Activated naive CD4-positive, alpha-beta T cell treated with anti-CD3 and anti-CD28 coated beads for 36 hours (primary cell): ENCODE measurements at regions of chr2 and their contacts with region 1.

Region 1: GRCh38 chr2:203893401-203893800 is 25.8 kb downstream of the CTLA4 start:
- DNase-seq: no peak
- H3K4me3 Mint-ChIP-seq: no peak overlapping the region
- H3K27ac Mint-ChIP-seq: no peak overlapping the region
- H3K4me1 Mint-ChIP-seq: peaks cover 67% of the 10 kb centered on the region
- H3K27me3 Mint-ChIP-seq: no peaks in the 10 kb centered on the region

Region 2: DNA sequence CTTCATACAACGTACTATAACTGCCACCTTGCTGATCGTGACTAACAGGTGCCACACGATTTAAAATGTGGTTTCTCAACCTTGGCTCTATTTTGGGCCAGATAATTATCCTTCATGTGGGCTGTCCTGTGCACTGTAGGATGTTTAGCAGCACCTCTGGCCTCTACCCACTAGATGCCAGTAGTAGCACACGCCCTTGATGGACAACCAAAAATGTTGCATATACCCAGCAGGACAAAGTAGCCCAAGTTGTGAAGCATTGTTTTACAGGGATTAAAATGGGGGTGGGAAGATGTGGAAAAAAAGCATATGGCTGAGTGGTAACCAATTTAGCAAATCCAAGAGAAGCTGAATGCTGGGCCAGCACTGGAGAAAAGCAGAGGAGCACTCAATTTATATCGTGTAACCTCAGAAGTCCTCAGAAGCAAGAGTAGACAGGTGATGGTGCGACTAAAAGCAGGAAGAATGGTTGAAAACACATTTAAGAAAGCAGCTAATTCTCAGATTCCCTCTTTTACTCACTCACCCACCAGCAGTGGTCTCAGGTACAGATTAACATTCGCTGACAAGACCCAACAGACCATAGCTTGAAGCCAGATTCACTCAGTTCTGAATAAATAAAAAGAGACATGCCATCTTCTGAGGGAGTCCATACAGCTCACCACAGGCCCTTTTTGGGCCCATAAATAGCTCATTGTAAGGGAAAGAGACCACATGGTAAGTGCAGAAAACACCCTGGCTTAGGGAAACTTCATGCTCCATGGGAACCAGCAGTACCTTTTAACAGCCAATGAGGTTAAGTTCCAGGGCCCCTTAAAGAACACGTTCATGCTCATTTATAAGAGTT is 408.9 kb before region 1 on chr2:
- CTCF ChIA-PET with region 1: no interaction called
- intact Hi-C with region 1: loop called (anchors 5 kb)
- DNase-seq: peak; percentile 68
- H3K4me3 Mint-ChIP-seq: no peak overlapping the region
- H3K27ac Mint-ChIP-seq: no peak overlapping the region
- H3K4me1 Mint-ChIP-seq: peaks cover 9% of the 10 kb centered on the region
- H3K27me3 Mint-ChIP-seq: no peaks in the 10 kb centered on the region

Region 3: GRCh38 chr2:203759690-203760365 is 133.6 kb before region 1 on chr2:
- CTCF ChIA-PET with region 1: no interaction called
- intact Hi-C with region 1: loop called (anchors 1 kb)
- DNase-seq: no peak
- H3K4me3 Mint-ChIP-seq: no peak overlapping the region
- H3K27ac Mint-ChIP-seq: no peak overlapping the region
- H3K4me1 Mint-ChIP-seq: peaks cover 59% of the 10 kb centered on the region
- H3K27me3 Mint-ChIP-seq: no peaks in the 10 kb centered on the region

Region 4: GRCh38 chr2:203871371-203871983 is 21.9 kb before region 1 on chr2:
- CTCF ChIA-PET with region 1: interaction called, 6 read pairs
- intact Hi-C with region 1: loop called (anchors 1 kb)
- DNase-seq: peak; percentile 69
- H3K4me3 Mint-ChIP-seq: peak overlapping the region; percentile 92
- H3K27ac Mint-ChIP-seq: peak overlapping the region; percentile 99
- H3K4me1 Mint-ChIP-seq: peaks cover 55% of the 10 kb centered on the region
- H3K27me3 Mint-ChIP-seq: no peaks in the 10 kb centered on the region

Region 5: GRCh38 chr2:203989521-203989920 is 96.1 kb after region 1 on chr2:
- CTCF ChIA-PET with region 1: no interaction called
- intact Hi-C with region 1: loop called (anchors 1 kb)
- DNase-seq: no peak
- H3K4me3 Mint-ChIP-seq: no peak overlapping the region
- H3K27ac Mint-ChIP-seq: peak overlapping the region; percentile 80
- H3K4me1 Mint-ChIP-seq: peaks cover 14% of the 10 kb centered on the region
- H3K27me3 Mint-ChIP-seq: no peaks in the 10 kb centered on the region